ENCODE measurements at regions of chr21 and their contacts with region 1.

Region 1: GRCh38 chr21:28745131-28746016 is 247.3 kb downstream of the LTN1 start:
- DNase-seq: peak; percentile 76 to 84
- H3K4me3 ChIP-seq: no peak overlapping the region
- H3K4me1 ChIP-seq: 0 out of 2 replicates have a peak, but pooled peaks cover 2% of the 10 kb centered on the region
- H3K27me3 ChIP-seq: no peaks in the 10 kb centered on the region

Region 2: DNA sequence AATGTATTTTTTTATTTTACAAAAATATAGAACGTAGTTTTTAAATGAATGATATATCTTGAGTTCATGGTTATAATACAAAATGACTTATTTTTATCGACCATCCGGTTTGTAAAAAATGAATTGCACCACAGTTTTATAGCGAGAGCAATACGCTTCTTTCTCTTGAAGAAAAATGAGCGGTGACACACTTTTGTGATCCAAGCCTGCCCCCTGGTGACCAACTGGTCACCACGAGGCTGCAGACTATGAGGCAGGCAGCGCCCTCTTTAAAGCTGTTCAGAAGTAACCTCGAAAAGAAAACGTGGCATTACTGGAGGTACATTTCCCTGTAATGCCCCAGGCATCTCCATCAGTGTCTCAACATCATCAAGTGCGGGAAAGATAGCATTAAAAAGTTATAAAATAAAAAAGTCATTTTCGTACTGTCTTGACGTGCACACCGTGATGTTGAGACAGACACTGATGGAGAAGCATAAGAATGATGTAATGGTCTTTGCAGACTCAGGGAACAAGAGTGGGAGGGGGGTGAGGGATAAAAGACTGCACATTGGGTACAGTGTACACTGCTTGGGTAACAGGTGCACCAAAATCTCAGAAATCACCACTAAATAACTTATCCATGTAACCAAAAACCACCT is 1044.3 kb before region 1 on chr21:
- in situ Hi-C with region 1: loop called (anchors 10 kb)
- DNase-seq: peak; percentile 61 to 82
- H3K4me3 ChIP-seq: no peak overlapping the region
- H3K4me1 ChIP-seq: no peaks in the 10 kb centered on the region
- H3K27me3 ChIP-seq: no peaks in the 10 kb centered on the region

Region 3: GRCh38 chr21:28480470-28480869 is 264.9 kb before region 1 on chr21:
- in situ Hi-C with region 1: no loop called
- DNase-seq: no peak
- H3K4me3 ChIP-seq: no peak overlapping the region
- H3K4me1 ChIP-seq: no peaks in the 10 kb centered on the region
- H3K27me3 ChIP-seq: no peaks in the 10 kb centered on the region

Region 4: DNA sequence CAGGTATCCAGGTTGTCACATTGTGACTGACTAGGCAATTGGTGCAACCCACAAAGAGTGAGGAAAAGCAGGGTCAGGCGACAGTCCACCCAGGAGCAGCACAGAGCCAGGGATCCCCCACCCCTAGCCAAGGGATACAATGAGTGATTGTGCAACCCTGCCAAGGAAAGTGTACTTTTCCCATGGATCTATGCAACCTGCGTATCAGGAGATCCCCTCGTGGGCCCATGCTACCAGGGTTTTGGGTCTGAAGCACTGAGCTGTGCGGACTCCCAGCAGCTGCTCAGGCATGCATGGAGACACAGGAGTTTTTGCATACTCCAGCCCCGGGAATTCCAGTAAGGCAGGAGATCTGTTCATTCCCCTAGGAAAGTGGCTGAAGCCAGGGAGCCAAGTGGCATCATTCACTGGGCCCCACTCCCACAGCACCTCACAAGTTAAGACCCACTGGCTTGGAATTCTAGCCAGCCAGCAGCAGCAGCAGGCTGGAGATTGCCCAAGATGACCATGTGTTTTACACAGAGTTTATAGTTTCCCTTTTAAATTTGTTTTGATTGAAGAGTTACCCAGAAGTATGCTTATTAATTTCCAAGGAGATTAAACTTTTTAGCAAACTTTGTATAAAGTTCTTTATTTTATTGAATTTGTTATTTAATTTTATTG is 111.3 kb after region 1 on chr21:
- in situ Hi-C with region 1: no loop called
- DNase-seq: no peak
- H3K4me3 ChIP-seq: no peak overlapping the region
- H3K4me1 ChIP-seq: no peaks in the 10 kb centered on the region
- H3K27me3 ChIP-seq: no peaks in the 10 kb centered on the region

Region 5: DNA sequence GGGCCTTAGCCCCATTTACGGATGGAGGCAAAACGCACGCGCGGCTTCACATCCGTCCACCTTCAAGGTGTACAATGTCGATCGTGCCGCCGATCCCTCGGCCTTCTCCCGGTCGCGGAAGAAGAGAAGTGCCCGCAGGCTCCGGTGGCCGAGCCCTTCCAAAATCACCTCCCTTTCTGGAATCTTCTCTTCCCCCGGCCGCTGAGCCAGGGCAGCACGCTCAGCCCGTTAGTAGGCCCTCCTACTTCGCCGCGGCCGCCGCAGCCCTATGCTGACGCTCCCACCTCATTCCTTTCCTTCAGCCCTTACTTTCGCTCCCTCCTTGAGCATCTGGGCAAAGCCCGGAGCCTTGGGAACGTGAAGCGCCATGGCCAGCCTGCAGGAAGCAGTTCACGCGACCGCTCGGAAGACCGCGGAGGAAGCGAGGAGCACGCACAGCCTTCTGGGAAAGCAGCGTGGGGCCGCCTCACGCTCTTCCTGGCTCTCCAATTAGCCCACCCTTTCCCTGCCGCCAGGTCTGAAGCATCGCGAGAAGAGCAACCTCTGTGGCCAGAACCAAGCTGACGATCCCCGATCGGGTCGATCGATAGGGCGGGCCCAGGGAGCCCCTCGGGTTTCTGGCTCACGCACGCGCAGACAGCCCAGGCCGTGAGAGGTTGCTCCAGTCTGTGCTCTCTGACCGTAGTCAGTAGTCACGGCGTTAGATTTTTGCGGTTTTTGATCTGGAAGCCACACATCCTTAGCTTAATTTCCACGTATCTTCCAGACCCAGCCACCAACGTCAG is 328.0 kb after region 1 on chr21 and contains the start of gene CCT8:
- in situ Hi-C with region 1: no loop called
- DNase-seq: peak; percentile 97 to 99
- H3K4me3 ChIP-seq: peak within 1 kb of the TSS; percentile 96
- H3K4me1 ChIP-seq: peaks cover 13% of the 10 kb centered on the region
- H3K27me3 ChIP-seq: no peaks in the 10 kb centered on the region

Measured in HAP-1 (cell line).